ENCODE measurements at regions of chr20 and their contacts with region 1.

Region 1: DNA sequence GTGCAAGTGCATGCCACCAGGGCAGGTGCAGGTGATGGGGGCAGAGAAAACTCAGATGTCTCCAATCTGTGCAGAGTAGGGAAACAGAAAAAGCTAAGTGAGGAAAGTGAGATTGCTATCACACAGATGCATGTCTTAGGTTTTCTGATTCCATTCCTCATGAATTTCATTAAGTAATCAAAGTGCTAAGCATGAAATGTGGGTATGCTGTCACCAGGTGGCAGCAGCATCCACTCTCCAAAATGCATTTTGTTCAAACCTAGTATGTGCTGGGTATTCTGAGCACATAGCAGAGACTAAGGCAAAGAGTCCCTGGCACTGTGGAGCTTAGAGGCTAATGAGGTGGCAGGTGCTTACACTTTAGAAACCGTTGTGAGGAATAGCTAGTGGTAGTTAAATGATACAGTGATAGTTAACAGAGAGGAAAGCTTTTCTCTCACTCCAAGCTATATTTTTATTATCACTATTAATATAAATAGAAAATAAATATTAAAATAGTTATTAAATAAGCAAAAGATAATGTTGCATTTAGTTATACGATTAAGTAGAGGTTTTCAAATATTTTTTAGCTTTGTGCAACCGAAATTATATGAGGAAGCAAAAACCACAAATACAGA is 179.5 kb downstream of the CDH26 start:
- DNase-seq: peak in 1 of 2 donors; percentile 44
- ATAC-seq: peak; percentile 50 to 81
- H3K4me3 ChIP-seq: peak overlapping the region; percentile 38 to 47 (median 44)
- H3K27ac ChIP-seq: peak overlapping the region; percentile 30 to 75 (median 74)
- H3K4me1 ChIP-seq: peaks cover 5 to 6% of the 10 kb centered on the region in 2 donors
- H3K27me3 ChIP-seq: no peaks in the 10 kb centered on the region
- CTCF ChIP-seq: peak in 4 of 5 experiments; percentile 10 to 63 (median 36)
- POLR2A ChIP-seq: no peak

Region 2: DNA sequence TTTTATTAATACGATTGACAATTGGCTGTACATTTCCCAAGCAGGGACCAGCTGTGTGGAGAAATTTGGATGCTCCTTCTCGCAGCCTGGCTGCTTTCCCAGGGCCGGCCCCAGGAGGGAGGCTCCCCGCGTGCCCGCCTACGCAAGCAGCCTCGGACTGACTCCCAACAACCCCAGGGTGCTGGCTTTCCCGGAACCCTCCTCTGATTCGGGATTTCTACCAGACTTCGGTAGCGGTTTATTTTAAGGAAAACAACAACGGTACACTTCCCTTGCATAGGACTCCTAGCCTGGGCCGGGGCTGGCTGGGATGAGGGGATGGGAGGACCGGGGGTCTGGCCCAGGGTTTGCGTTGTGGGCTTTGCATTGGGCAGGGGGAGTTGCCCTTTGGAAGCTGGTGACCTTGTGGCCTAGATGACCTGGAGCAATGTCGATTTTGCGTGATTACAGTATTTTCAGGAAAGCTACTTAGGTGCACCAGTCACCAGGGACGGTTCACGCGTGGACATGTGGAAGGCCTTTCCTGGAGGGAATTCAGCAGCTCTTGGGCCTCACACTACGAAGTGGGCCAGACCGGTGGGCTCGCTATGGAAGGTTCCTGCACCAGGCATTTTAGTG is 554.2 kb before region 1 on chr20:
- in situ Hi-C with region 1: no loop called
- intact Hi-C with region 1: no loop called
- DNase-seq: no peak
- ATAC-seq: peak in 1 of 2 donors; percentile 33
- H3K4me3 ChIP-seq: no peak overlapping the region
- H3K27ac ChIP-seq: no peak overlapping the region
- H3K4me1 ChIP-seq: no peaks in the 10 kb centered on the region
- H3K27me3 ChIP-seq: peaks cover 6 to 8% (median 8%) of the 10 kb centered on the region in 3 donors
- CTCF ChIP-seq: no peak
- POLR2A ChIP-seq: no peak

Region 3: DNA sequence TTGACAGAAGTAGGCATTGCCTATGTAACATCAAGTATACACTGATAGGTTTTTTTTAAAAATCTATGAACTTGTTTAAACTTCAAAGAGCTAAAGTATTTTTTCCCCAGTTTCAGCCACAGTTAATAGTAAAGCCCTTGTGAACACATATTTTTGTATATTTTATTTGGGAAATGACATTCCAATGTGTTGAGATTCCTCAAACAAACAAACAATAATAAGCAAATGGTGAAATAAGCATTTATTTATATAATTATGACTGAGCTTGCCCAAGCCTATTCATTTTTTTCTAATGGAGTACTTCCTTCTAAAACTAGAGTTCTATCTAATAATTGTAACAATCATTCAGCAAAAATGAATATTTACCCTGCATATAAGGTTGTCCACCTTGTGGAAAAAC is 216.8 kb before region 1 on chr20:
- in situ Hi-C with region 1: no loop called
- intact Hi-C with region 1: no loop called
- DNase-seq: no peak
- ATAC-seq: no peak
- H3K4me3 ChIP-seq: no peak overlapping the region
- H3K27ac ChIP-seq: no peak overlapping the region
- H3K4me1 ChIP-seq: no peaks in the 10 kb centered on the region
- H3K27me3 ChIP-seq: no peaks in the 10 kb centered on the region
- CTCF ChIP-seq: no peak
- POLR2A ChIP-seq: no peak

Region 4: GRCh38 chr20:60192326-60192725 is 54.6 kb after region 1 on chr20:
- in situ Hi-C with region 1: no loop called
- intact Hi-C with region 1: loop called (anchors 5 kb)
- DNase-seq: no peak
- ATAC-seq: no peak
- H3K4me3 ChIP-seq: no peak overlapping the region
- H3K27ac ChIP-seq: no peak overlapping the region
- H3K4me1 ChIP-seq: peaks cover 4 to 8% of the 10 kb centered on the region in 2 donors
- H3K27me3 ChIP-seq: no peaks in the 10 kb centered on the region
- CTCF ChIP-seq: no peak
- POLR2A ChIP-seq: no peak

Measured in gastrocnemius medialis (tissue), 4 donors.